ENCODE measurements at regions of chr10 and their contacts with region 1.

Region 1: GRCh38 chr10:13062803-13063202 is 37.2 kb upstream of the OPTN start:
- DNase-seq: no peak
- CTCF ChIP-seq: no peak

Region 2: DNA sequence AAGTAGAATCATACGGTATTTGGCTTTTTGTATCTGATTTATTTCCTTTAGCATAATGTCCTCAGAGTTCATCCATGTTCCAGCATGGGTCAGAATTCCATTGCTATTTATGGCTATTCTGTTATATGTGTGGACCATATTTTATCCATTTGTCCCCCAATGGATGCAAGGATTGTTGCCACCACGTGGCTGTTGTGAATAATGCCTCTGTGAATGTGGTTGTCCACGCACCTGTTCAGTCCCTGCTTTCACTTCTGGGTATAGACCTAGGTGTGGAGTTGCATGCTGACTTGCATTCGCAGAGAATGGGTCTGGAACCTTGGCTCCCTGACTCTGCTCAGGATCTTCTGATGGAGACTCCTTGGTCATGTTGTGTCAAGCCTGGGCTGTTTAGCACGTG is 513.5 kb before region 1 on chr10:
- CTCF ChIA-PET with region 1: no interaction called
- POLR2A ChIA-PET with region 1: no interaction called
- DNase-seq: peak; percentile 40
- CTCF ChIP-seq: no peak

Region 3: GRCh38 chr10:13074561-13075451 is 12.0 kb after region 1 on chr10:
- CTCF ChIA-PET with region 1: interaction called, 15 read pairs
- POLR2A ChIA-PET with region 1: no interaction called
- DNase-seq: peak; percentile 75
- CTCF ChIP-seq: peak; percentile 80